CD4-positive, alpha-beta memory T cell (primary cell): ENCODE measurements at regions of chr2 and their contacts with region 1.

Region 1: GRCh38 chr2:118221666-118222594 is 133.7 kb downstream of the INSIG2 start:
- DNase-seq: peak; percentile 52 to 61 (median 54)
- H3K4me3 ChIP-seq: no peak overlapping the region
- H3K4me3 Mint-ChIP-seq: peak overlapping the region in 2 of 8 donors; percentile 1 to 11
- H3K27ac ChIP-seq: no peak overlapping the region
- H3K27ac Mint-ChIP-seq: no peak overlapping the region
- H3K4me1 ChIP-seq: peaks cover 16% of the 10 kb centered on the region
- H3K4me1 Mint-ChIP-seq: peaks cover 5 to 21% (median 10%) of the 10 kb centered on the region in 4 donors
- H3K27me3 ChIP-seq: peaks cover 48% of the 10 kb centered on the region
- H3K27me3 Mint-ChIP-seq: peaks cover 44 to 58% of the 10 kb centered on the region in 2 donors

Region 2: DNA sequence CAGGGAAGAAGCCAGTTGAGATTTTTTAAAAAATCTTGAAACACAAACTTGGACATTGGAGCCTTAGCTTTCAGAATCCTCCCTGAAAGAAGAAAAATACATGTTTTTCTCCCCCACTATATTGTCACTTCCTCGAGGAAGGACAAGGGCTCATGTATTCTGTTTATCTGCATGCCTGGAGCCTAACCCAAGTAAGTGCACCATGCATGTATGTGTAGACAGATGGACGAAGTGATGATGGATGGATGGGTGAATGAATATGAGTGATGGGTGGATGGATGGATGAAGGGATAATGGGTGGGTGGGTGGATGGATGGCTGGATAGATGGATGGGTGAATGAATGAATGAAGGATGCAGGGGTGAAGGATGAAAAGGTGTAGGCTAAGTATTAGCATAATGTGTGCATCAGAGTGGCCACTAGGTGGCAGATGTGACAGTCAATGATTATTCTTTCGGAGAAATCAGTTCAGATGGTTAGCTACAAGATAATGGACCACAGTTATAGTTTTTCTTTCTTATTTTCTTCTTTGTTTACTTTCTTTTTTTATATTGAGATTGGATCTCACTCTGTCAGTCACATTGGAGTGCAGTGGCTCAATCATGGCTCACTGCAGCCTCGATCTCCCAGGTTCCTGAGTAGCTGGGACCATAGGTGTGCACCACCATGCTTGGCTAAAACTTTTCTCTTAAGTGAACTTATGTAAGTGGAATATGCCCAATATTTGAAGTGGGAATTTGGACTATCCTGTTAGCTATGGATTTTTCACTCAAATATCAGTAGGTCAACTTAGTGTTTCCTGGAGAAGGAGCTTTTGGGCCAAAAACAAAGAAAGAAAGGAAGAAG is 189.5 kb before region 1 on chr2:
- CTCF ChIA-PET with region 1: no interaction called
- POLR2A ChIA-PET with region 1: no interaction called
- intact Hi-C with region 1: loop called (anchors 1 kb)
- DNase-seq: peak in 3 of 5 donors; percentile 27 to 32 (median 29)
- H3K4me3 ChIP-seq: no peak overlapping the region
- H3K4me3 Mint-ChIP-seq: no peak overlapping the region
- H3K27ac ChIP-seq: no peak overlapping the region
- H3K27ac Mint-ChIP-seq: peak overlapping the region in 1 of 7 donors; percentile 5
- H3K4me1 ChIP-seq: no peaks in the 10 kb centered on the region
- H3K4me1 Mint-ChIP-seq: no peaks in the 10 kb centered on the region
- H3K27me3 ChIP-seq: peaks cover 9% of the 10 kb centered on the region
- H3K27me3 Mint-ChIP-seq: peaks cover 26 to 31% of the 10 kb centered on the region in 2 donors

Region 3: DNA sequence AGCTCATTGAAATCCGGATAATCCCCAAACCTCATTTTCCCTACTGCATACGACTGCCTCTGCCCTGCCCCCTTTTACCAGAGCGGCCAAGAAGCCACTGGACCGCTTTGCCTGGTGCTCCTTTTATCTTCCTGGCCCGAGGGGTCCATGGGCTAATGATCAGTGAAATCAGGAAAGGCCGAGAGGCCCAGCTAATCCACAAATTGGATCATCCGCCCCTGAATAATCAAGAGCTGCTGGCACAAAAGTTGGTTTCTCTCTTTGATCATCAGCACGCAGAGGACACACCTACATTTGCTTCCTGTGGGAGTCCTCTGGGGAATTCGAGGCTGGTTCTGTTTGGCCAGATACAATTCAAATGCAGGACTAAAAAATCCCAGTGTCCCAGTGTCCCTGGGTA is 10.9 kb after region 1 on chr2:
- CTCF ChIA-PET with region 1: interaction called, 10 read pairs
- POLR2A ChIA-PET with region 1: no interaction called
- intact Hi-C with region 1: no loop called
- DNase-seq: no peak
- H3K4me3 ChIP-seq: no peak overlapping the region
- H3K4me3 Mint-ChIP-seq: no peak overlapping the region
- H3K27ac ChIP-seq: no peak overlapping the region
- H3K27ac Mint-ChIP-seq: no peak overlapping the region
- H3K4me1 ChIP-seq: no peaks in the 10 kb centered on the region
- H3K4me1 Mint-ChIP-seq: no peaks in the 10 kb centered on the region
- H3K27me3 ChIP-seq: no peaks in the 10 kb centered on the region
- H3K27me3 Mint-ChIP-seq: peaks cover 19 to 39% of the 10 kb centered on the region in 2 donors

Region 4: DNA sequence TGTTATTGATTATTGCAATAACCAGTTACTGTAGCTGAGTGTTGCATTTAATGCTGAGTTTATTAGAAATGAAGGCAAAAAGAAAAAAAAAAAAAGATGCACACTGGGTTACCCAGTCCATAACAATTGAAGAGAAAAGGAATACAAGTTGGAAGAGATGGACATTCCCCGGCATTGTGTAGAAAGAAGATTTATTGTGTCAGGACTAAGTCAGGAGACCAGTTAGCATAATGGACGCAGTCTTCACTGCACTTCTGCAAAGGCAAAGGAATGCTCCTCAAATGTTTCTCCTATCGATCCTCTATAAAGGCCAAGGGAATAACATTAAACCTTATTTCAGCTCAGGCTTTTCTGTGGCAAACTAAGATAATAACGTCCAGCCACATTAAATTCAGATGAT is 24.2 kb after region 1 on chr2:
- CTCF ChIA-PET with region 1: no interaction called
- POLR2A ChIA-PET with region 1: no interaction called
- intact Hi-C with region 1: no loop called
- DNase-seq: no peak
- H3K4me3 ChIP-seq: no peak overlapping the region
- H3K4me3 Mint-ChIP-seq: no peak overlapping the region
- H3K27ac ChIP-seq: no peak overlapping the region
- H3K27ac Mint-ChIP-seq: no peak overlapping the region
- H3K4me1 ChIP-seq: no peaks in the 10 kb centered on the region
- H3K4me1 Mint-ChIP-seq: no peaks in the 10 kb centered on the region
- H3K27me3 ChIP-seq: no peaks in the 10 kb centered on the region
- H3K27me3 Mint-ChIP-seq: peaks cover 11 to 23% of the 10 kb centered on the region in 2 donors

Region 5: GRCh38 chr2:118464546-118465265 is 242.8 kb after region 1 on chr2:
- CTCF ChIA-PET with region 1: no interaction called
- POLR2A ChIA-PET with region 1: no interaction called
- intact Hi-C with region 1: loop called (anchors 10 kb)
- DNase-seq: no peak
- H3K4me3 ChIP-seq: no peak overlapping the region
- H3K4me3 Mint-ChIP-seq: no peak overlapping the region
- H3K27ac ChIP-seq: no peak overlapping the region
- H3K27ac Mint-ChIP-seq: no peak overlapping the region
- H3K4me1 ChIP-seq: no peaks in the 10 kb centered on the region
- H3K4me1 Mint-ChIP-seq: no peaks in the 10 kb centered on the region
- H3K27me3 ChIP-seq: no peaks in the 10 kb centered on the region
- H3K27me3 Mint-ChIP-seq: peaks cover 5 to 12% of the 10 kb centered on the region in 2 donors

Region 6: GRCh38 chr2:118865106-118865505 is 643.2 kb after region 1 on chr2:
- CTCF ChIA-PET with region 1: interaction called, 3 read pairs
- POLR2A ChIA-PET with region 1: no interaction called
- intact Hi-C with region 1: loop called (anchors 2 kb)
- DNase-seq: peak in 1 of 5 donors; percentile 23
- H3K4me3 ChIP-seq: no peak overlapping the region
- H3K4me3 Mint-ChIP-seq: no peak overlapping the region
- H3K27ac ChIP-seq: no peak overlapping the region
- H3K27ac Mint-ChIP-seq: no peak overlapping the region
- H3K4me1 ChIP-seq: no peaks in the 10 kb centered on the region
- H3K4me1 Mint-ChIP-seq: no peaks in the 10 kb centered on the region
- H3K27me3 ChIP-seq: peaks cover 5% of the 10 kb centered on the region
- H3K27me3 Mint-ChIP-seq: peaks cover 31 to 32% of the 10 kb centered on the region in 2 donors

Region 7: DNA sequence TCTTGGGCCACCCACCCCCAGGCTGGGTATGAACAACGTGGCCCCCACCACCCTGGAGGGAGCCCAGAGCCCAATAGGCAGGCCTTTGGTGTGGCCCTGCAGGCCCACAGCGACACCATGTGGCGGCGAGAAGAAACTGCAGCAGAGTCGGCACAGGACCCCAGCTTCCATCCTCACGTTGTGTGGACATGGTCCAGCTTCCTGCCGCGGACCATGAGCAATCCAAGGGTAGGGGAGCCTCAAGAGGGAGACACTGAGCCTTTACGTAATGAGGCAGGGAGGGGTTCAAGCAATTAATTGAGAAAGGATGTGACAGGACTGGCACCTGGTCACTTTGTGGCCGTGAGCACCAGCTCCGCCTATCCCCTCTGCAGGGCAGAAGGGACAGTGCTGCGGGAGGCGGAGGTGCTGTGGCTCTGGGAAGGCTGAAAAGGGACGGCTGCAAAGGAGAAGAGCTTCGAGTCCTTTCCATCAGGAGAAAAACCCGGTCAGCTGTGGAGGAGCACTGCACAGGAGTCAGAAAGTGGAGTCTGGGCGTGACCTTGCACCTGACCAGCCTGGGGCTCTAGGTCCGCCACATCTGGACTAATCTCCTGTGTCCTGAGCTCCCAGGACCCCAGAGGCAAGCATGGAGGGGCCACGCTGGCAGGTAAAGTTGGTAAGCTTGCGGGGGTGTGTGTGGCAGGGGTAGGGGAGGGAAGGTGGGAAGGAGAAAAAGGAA is 1254.5 kb after region 1 on chr2:
- CTCF ChIA-PET with region 1: no interaction called
- POLR2A ChIA-PET with region 1: no interaction called
- intact Hi-C with region 1: loop called (anchors 5 kb)
- DNase-seq: peak in 4 of 5 donors; percentile 9 to 19 (median 12)
- H3K4me3 ChIP-seq: no peak overlapping the region
- H3K4me3 Mint-ChIP-seq: no peak overlapping the region
- H3K27ac ChIP-seq: no peak overlapping the region
- H3K27ac Mint-ChIP-seq: no peak overlapping the region
- H3K4me1 ChIP-seq: no peaks in the 10 kb centered on the region
- H3K4me1 Mint-ChIP-seq: no peaks in the 10 kb centered on the region
- H3K27me3 ChIP-seq: no peaks in the 10 kb centered on the region
- H3K27me3 Mint-ChIP-seq: peaks cover 8% of the 10 kb centered on the region in 2 donors